ENCODE measurements at regions of chr12 and their contacts with region 1.

Region 1: GRCh38 chr12:5428332-5429221 is 3.3 kb upstream of the NTF3 start:
- DNase-seq: peak; percentile 75
- ATAC-seq: peak; percentile 18; the same call in 1 of the 2 replicates
- H3K4me3 ChIP-seq: no peak overlapping the region; the same call in 1 of the 2 replicates
- H3K27ac ChIP-seq: no peak overlapping the region
- H3K4me1 ChIP-seq: peaks cover 9% of the 10 kb centered on the region
- H3K27me3 ChIP-seq: no peaks in the 10 kb centered on the region
- CTCF ChIP-seq: peak; percentile 89
- POLR2A ChIP-seq: 0 out of 2 replicates have a peak, but pooled peaks have one; percentile 35
- RAD21 ChIP-seq: peak; percentile 93

Region 2: DNA sequence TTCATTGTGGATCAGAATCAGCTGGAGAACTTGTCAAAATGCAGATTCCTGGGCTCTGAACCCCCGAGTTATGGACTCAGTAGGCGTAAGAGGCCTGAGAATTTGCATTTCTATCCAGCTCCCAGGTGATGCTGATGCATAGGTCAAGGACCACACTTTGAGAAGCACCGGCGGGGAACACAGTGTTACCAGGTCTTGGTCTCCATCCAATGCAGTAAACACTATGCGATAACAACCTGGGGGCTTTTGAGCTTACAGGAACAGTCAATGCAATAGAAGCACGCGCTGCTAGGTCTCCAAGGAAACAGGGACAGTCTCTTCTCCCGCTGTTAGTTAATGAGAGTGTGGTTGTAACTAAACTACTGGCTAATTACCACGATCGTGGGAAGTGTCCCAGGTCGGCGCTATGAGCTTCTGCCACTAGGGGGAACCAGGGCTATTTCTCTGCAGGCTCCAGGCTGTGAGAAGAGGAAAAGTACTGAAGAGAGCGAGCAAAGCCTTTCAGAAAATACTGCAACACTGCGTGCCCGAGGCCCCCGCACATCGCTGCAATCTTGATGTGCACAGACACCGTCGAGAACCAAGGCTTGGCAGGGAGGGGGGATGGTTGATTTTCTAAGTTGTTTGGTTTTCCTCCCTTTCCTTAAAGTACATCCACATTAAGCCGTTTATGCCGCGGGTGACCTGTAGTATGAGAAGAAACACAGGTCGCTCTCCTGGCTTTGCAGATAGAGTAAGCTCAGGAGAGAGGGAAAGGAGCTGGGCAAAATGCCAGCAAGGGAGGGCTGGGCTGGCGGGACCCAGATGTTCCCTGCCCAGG is 570.9 kb before region 1 on chr12:
- CTCF ChIA-PET with region 1: no interaction called
- POLR2A ChIA-PET with region 1: no interaction called
- dilution Hi-C with region 1: no loop called
- in situ Hi-C with region 1: no loop called
- intact Hi-C with region 1: loop called (anchors 5 kb)
- DNase-seq: peak; percentile 63
- ATAC-seq: peak; percentile 93
- H3K4me3 ChIP-seq: no peak overlapping the region
- H3K27ac ChIP-seq: no peak overlapping the region
- H3K4me1 ChIP-seq: no peaks in the 10 kb centered on the region
- H3K27me3 ChIP-seq: peaks cover 36% of the 10 kb centered on the region
- CTCF ChIP-seq: peak; percentile 89
- POLR2A ChIP-seq: no peak
- RAD21 ChIP-seq: peak; percentile 64

Region 3: GRCh38 chr12:5171701-5172100 is 256.9 kb before region 1 on chr12:
- CTCF ChIA-PET with region 1: interaction called, 4 read pairs
- POLR2A ChIA-PET with region 1: no interaction called
- dilution Hi-C with region 1: no loop called
- in situ Hi-C with region 1: loop called (anchors 5 kb)
- intact Hi-C with region 1: loop called (anchors 2 kb)
- DNase-seq: peak; percentile 77
- ATAC-seq: peak; percentile 34
- H3K4me3 ChIP-seq: no peak overlapping the region
- H3K27ac ChIP-seq: no peak overlapping the region
- H3K4me1 ChIP-seq: peaks cover 23% of the 10 kb centered on the region
- H3K27me3 ChIP-seq: no peaks in the 10 kb centered on the region
- CTCF ChIP-seq: peak; percentile 82
- POLR2A ChIP-seq: no peak
- RAD21 ChIP-seq: peak; percentile 87

Region 4: DNA sequence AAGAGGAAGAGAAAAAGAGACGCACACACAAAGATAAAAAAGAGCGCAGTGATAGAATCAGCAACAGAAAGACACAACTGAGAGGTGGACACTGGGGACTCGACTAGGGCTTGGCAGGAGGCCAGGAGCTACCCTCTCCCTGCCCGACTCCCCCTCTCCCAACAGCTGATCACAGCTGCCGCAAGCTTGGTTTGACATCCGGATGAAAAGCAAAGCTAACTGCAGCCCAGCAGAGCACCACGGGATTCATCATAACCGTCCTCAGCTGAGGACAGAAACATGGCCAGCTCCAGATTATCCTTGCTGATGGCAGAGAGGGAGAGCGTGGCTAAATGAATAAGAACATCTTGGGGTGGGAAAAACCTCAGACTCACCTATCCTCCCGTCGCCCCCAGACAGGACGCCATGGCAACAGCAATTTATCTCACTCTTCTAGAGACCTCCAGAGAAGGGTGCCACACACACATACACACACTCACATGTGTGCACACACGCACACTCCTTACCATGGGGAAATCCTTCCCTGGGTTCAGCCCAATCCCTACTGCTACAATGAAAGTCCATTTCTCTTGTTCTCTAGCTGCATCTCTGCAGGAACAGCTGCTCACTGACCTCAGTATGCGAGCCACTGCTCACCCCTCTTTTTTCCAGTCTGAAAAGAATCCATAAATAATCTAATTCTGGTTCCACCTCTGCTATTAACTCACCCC is 138.6 kb after region 1 on chr12:
- CTCF ChIA-PET with region 1: no interaction called
- POLR2A ChIA-PET with region 1: interaction called, 4 read pairs
- dilution Hi-C with region 1: no loop called
- in situ Hi-C with region 1: no loop called
- intact Hi-C with region 1: loop called (anchors 5 kb)
- DNase-seq: peak; percentile 25
- ATAC-seq: 0 out of 2 replicates have a peak, but pooled peaks have one; percentile 30
- H3K4me3 ChIP-seq: no peak overlapping the region
- H3K27ac ChIP-seq: no peak overlapping the region
- H3K4me1 ChIP-seq: peaks cover 18% of the 10 kb centered on the region
- H3K27me3 ChIP-seq: peaks cover 3% of the 10 kb centered on the region; the same call in 1 of the 2 replicates
- CTCF ChIP-seq: no peak
- POLR2A ChIP-seq: no peak
- RAD21 ChIP-seq: no peak

Region 5: GRCh38 chr12:5796171-5796958 is 367.8 kb after region 1 on chr12:
- CTCF ChIA-PET with region 1: interaction called, 9 read pairs
- POLR2A ChIA-PET with region 1: no interaction called
- dilution Hi-C with region 1: no loop called
- in situ Hi-C with region 1: loop called (anchors 5 kb)
- intact Hi-C with region 1: loop called (anchors 1 kb)
- DNase-seq: peak; percentile 30
- ATAC-seq: peak; percentile 86
- H3K4me3 ChIP-seq: no peak overlapping the region
- H3K27ac ChIP-seq: no peak overlapping the region
- H3K4me1 ChIP-seq: no peaks in the 10 kb centered on the region
- H3K27me3 ChIP-seq: peaks cover 35% of the 10 kb centered on the region
- CTCF ChIP-seq: peak; percentile 72
- POLR2A ChIP-seq: no peak
- RAD21 ChIP-seq: peak; percentile 91

Region 6: GRCh38 chr12:6039894-6040568 is 611.5 kb after region 1 on chr12:
- CTCF ChIA-PET with region 1: no interaction called
- POLR2A ChIA-PET with region 1: no interaction called
- dilution Hi-C with region 1: no loop called
- in situ Hi-C with region 1: loop called (anchors 10 kb)
- intact Hi-C with region 1: loop called (anchors 1 kb)
- DNase-seq: peak; percentile 74
- ATAC-seq: peak; percentile 95
- H3K4me3 ChIP-seq: no peak overlapping the region
- H3K27ac ChIP-seq: no peak overlapping the region
- H3K4me1 ChIP-seq: peaks cover 8% of the 10 kb centered on the region; the same call in 1 of the 2 replicates
- H3K27me3 ChIP-seq: no peaks in the 10 kb centered on the region
- CTCF ChIP-seq: peak; percentile 96
- POLR2A ChIP-seq: no peak
- RAD21 ChIP-seq: peak; percentile 93

Measured in IMR-90 (cell line).